Activated T-helper 1 cell treated with anti-CD3 and anti-CD28 coated beads, Interleukin-12 subunit alpha, Interleukin-12 subunit beta, Interleukin-2, Interleukin-4 antibody, amounts not matched to agents 30 ng/mL and 10 ng/mL and 1 ng/mL, durations not matched to agents 14 hours and 24 hours and 36 hours (primary cell): ENCODE measurements at regions of chr13 and their contacts with region 1.

Region 1: GRCh38 chr13:49140910-49141611 is 79.1 kb upstream of the MLNR start:
- DNase-seq: no peak
- H3K4me3 Mint-ChIP-seq: no peak overlapping the region
- H3K27ac Mint-ChIP-seq: peak overlapping the region; percentile 47
- H3K4me1 Mint-ChIP-seq: peaks cover 27% of the 10 kb centered on the region
- H3K27me3 Mint-ChIP-seq: no peaks in the 10 kb centered on the region

Region 2: GRCh38 chr13:47673000-47673915 is 1467.8 kb before region 1 on chr13:
- intact Hi-C with region 1: no loop called
- DNase-seq: no peak
- H3K4me3 Mint-ChIP-seq: no peak overlapping the region
- H3K27ac Mint-ChIP-seq: no peak overlapping the region
- H3K4me1 Mint-ChIP-seq: no peaks in the 10 kb centered on the region
- H3K27me3 Mint-ChIP-seq: no peaks in the 10 kb centered on the region

Region 3: GRCh38 chr13:48660361-48661076 is 480.5 kb before region 1 on chr13:
- intact Hi-C with region 1: no loop called
- DNase-seq: no peak
- H3K4me3 Mint-ChIP-seq: no peak overlapping the region
- H3K27ac Mint-ChIP-seq: no peak overlapping the region
- H3K4me1 Mint-ChIP-seq: no peaks in the 10 kb centered on the region
- H3K27me3 Mint-ChIP-seq: no peaks in the 10 kb centered on the region

Region 4: DNA sequence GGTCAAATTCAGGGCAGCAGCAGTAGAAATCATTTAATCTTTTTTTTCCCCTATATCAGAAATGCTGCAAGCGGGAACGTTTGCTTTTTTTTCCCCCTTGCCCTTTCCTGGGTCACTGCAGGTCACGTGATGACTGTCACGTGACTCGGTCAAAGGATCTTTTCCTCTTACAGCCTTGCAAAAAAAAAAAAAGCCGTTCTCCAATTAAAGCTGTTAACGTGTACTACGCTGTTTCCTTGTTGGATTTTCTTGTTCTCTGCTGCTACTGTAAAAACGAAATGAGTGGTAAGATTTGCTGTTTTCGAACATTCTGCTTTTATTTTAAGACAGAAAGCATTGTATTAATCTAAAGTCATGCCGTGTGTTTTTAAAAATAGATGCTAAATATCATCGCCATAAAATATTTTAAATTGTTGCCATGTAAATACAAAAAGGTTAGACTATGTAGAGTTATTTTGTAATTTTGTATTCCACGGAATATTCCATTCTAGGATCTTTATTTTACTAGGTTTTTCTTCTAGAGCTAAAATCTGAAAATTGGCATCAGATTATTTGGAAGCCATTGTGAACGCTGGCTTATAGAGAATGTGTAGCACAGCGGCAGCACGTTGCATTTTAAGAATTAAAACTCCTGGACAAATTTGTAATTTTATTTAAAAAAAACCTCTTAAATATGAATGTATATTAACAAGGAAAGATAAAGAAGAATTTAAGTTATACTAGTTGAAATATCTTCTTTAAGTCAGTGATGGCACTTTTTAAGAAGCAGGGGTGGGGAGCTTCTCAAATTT is 30.7 kb before region 1 on chr13:
- intact Hi-C with region 1: loop called (anchors 2 kb)
- DNase-seq: peak; percentile 71
- H3K4me3 Mint-ChIP-seq: peak overlapping the region; percentile 87
- H3K27ac Mint-ChIP-seq: peak overlapping the region; percentile 70
- H3K4me1 Mint-ChIP-seq: peaks cover 31% of the 10 kb centered on the region
- H3K27me3 Mint-ChIP-seq: no peaks in the 10 kb centered on the region